GM18951 (cell line): ENCODE measurements at regions of chr1 and their contacts with region 1.

Region 1: GRCh38 chr1:203216274-203217138 is 13.0 kb downstream of the CHIT1 start:
- POLR2A ChIP-seq: no peak

Region 2: GRCh38 chr1:203038891-203039608 is 177.5 kb before region 1 on chr1:
- in situ Hi-C with region 1: loop called (anchors 10 kb)
- POLR2A ChIP-seq: no peak

Region 3: DNA sequence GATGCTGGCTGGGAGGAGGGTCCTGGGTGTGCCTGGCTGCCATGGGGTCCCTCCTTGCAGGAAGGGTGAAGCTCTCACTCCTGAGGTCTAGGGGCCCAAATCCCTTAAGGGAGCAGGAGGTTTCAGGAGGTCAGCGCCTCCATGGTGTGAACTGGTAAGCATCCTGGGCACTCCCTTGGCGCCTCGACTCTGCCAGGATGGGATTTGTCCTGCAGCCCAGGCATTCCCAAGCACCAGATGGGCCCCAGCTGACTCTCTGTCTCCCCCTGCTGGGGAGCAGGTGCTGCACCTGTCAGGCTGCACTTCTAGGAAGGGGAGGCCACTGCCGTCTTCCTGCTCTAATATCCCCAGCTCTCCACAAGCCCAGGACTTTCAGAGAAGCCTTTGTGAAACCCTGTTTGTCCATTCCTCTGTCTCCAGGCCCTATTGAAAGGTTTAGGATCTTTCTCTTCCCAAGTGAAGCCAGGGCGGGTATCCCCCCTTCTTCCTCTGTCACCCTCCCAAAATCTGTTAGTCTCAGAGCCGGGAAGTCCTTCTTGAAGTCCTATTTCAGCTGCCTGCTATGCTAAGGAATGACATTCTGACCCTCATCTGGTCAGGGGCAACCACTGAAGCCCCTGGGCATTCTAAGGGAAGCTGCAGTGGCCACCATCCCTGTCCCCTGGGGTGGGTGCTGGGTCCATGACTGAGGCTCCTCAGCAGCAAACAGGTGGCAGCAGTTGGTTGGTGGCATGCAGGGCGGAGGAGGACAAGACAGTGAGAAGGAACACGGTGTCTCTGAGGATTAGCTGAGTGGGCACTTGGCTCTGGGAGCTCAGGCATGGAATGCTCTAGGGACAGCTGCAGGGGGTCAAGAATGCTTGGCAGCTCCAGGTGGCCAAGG is 44.1 kb before region 1 on chr1:
- in situ Hi-C with region 1: loop called (anchors 5 kb)
- POLR2A ChIP-seq: no peak

Region 4: DNA sequence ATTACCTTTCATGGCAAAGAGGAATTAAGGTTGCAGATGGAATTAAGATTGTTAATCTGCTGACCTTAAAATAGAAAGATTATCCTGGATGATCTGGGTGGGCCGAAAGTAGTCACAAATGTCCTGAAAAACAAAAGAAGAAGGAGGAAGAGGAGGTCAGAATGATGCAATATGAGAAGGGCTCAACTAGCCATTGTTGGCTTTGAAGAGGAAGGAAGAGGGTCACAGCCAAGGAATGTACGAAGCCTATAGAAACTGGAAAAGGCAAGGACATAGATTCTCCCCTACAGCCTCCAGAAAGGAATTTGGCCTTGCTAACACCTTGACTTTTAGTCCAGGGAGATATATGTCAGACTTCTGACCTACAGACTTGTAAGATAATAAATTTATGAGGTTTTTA is 173.8 kb after region 1 on chr1:
- in situ Hi-C with region 1: no loop called
- POLR2A ChIP-seq: no peak